Activated CD4-positive, alpha-beta T cell treated with anti-CD3 and anti-CD28 coated beads, Interleukin-2, amount 10 ng/mL, durations not matched to agents 24 days and 14 days (primary cell): ENCODE measurements at regions of chr15 and their contacts with region 1.

Region 1: GRCh38 chr15:72473614-72474465 is at the start of gene ARIH1:
- DNase-seq: peak; percentile 99
- H3K4me3 Mint-ChIP-seq: peak within 1 kb of the TSS; percentile 91
- H3K27ac Mint-ChIP-seq: peak within 1 kb of the TSS; percentile 99
- H3K4me1 Mint-ChIP-seq: peaks cover 31% of the 10 kb centered on the region
- H3K27me3 Mint-ChIP-seq: no peaks in the 10 kb centered on the region
- total RNA-seq, gene ARIH1: 140 and 141 TPM in 2 replicates

Region 2: DNA sequence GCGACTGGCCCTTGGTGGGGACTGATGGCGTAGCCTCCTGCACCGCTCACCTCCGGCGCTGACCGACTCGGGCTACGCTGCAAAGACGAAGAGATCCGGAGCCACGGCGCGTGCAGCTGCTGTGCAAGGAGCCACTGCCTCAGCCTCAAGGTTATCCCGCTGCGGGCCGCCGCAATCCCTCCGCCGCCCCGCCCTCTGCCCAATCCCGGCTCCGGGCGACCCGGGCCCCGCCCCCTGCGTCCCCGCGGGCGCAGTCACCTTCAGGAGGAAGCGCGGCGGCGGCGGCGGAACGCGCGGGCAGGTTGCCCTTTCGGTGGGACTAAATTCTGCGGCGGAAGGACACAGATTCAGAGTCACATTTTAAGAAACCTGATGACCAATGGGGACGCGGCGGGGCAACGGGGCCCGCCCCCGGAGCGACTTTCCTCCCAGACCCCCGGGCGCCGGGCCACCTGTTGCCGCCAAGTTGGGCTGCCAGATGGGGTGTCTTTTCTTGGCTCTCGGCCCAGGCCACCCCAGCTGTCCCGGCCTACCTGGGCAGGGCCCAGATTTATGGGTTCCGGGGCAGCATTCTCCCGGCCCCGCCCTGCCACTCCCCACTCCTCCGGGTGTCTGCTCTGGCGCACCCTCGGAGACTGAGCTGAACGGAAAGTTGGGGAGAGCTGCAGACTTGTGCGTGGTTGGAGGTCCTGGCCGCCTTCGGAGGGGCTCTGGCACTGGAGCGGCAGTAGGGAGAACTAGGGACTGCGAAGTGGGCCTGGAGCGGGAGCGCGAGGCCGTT is 242.6 kb before region 1 on chr15 and contains the start of gene PKM:
- intact Hi-C with region 1: loop called (anchors 1 kb)
- DNase-seq: peak; percentile 99
- H3K4me3 Mint-ChIP-seq: peak within 1 kb of the TSS; percentile 95
- H3K27ac Mint-ChIP-seq: peak within 1 kb of the TSS; percentile 98
- H3K4me1 Mint-ChIP-seq: peaks cover 45% of the 10 kb centered on the region
- H3K27me3 Mint-ChIP-seq: no peaks in the 10 kb centered on the region
- total RNA-seq, gene PKM: 2,437 and 2,525 TPM in 2 replicates

Region 3: GRCh38 chr15:72319985-72320671 is 153.7 kb before region 1 on chr15 and contains the start of gene CELF6:
- intact Hi-C with region 1: loop called (anchors 1 kb)
- DNase-seq: peak; percentile 92
- H3K4me3 Mint-ChIP-seq: peak within 1 kb of the TSS; percentile 75
- H3K27ac Mint-ChIP-seq: peak within 1 kb of the TSS; percentile 8
- H3K4me1 Mint-ChIP-seq: peaks cover 19% of the 10 kb centered on the region
- H3K27me3 Mint-ChIP-seq: peaks cover 23% of the 10 kb centered on the region
- total RNA-seq, gene CELF6: 0.19 and 0.21 TPM in 2 replicates

Region 4: GRCh38 chr15:72521682-72522081 is 47.8 kb after region 1 on chr15:
- intact Hi-C with region 1: no loop called
- DNase-seq: no peak
- H3K4me3 Mint-ChIP-seq: no peak overlapping the region
- H3K27ac Mint-ChIP-seq: peak overlapping the region; percentile 27
- H3K4me1 Mint-ChIP-seq: peaks cover 6% of the 10 kb centered on the region
- H3K27me3 Mint-ChIP-seq: no peaks in the 10 kb centered on the region

Region 5: GRCh38 chr15:72685925-72686794 is 212.3 kb after region 1 on chr15 and contains the starts of genes BBS4 and HIGD2B:
- intact Hi-C with region 1: loop called (anchors 5 kb)
- DNase-seq: peak; percentile 97
- H3K4me3 Mint-ChIP-seq: peak within 1 kb of the TSS; percentile 97
- H3K27ac Mint-ChIP-seq: peak within 1 kb of the TSS; percentile 88
- H3K4me1 Mint-ChIP-seq: peaks cover 21% of the 10 kb centered on the region
- H3K27me3 Mint-ChIP-seq: peaks cover under 1% of the 10 kb centered on the region
- total RNA-seq, gene BBS4: 8.3 and 10.2 TPM in 2 replicates
- total RNA-seq, gene HIGD2B: not detected in 2 replicates